Breast epithelium (tissue), 4 donors: ENCODE measurements at regions of chr3 and their contacts with region 1.

Region 1: GRCh38 chr3:184651904-184652303 is 60.0 kb downstream of the MAGEF1 start:
- DNase-seq: peak in 1 of 2 donors; percentile 64
- H3K4me3 ChIP-seq: no peak overlapping the region
- H3K27ac ChIP-seq: peak overlapping the region; percentile 65 to 80
- H3K4me1 ChIP-seq: peaks cover 1 to 4% of the 10 kb centered on the region in 2 donors
- H3K27me3 ChIP-seq: no peaks in the 10 kb centered on the region
- CTCF ChIP-seq: no peak
- POLR2A ChIP-seq: no peak

Region 2: DNA sequence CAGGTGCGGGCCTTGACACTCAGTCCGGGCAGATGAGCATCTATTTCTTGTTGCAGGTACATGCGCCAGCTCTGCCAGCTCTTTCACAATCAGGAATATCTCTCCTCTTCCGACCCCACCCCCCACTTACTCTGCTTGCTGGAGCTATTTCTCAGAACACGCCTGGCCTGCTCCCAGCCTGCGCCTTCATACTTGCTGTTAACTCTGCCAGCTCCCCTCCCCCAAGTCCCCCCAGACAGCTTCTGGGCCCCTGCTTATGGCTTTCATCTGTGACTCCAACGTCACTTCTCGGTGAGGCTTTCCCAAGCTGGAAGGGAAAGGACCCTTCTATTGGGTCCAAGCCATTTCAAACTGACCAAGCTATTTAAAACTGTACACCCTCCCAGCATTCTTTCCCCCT is 44.8 kb after region 1 on chr3:
- intact Hi-C with region 1: loop called (anchors 2 kb)
- DNase-seq: peak in 1 of 2 donors; percentile 63
- H3K4me3 ChIP-seq: no peak overlapping the region
- H3K27ac ChIP-seq: no peak overlapping the region
- H3K4me1 ChIP-seq: peaks cover 0 to 9% of the 10 kb centered on the region in 2 donors
- H3K27me3 ChIP-seq: no peaks in the 10 kb centered on the region
- CTCF ChIP-seq: no peak
- POLR2A ChIP-seq: no peak